ENCODE measurements at regions of chr14 and their contacts with region 1.

Region 1: DNA sequence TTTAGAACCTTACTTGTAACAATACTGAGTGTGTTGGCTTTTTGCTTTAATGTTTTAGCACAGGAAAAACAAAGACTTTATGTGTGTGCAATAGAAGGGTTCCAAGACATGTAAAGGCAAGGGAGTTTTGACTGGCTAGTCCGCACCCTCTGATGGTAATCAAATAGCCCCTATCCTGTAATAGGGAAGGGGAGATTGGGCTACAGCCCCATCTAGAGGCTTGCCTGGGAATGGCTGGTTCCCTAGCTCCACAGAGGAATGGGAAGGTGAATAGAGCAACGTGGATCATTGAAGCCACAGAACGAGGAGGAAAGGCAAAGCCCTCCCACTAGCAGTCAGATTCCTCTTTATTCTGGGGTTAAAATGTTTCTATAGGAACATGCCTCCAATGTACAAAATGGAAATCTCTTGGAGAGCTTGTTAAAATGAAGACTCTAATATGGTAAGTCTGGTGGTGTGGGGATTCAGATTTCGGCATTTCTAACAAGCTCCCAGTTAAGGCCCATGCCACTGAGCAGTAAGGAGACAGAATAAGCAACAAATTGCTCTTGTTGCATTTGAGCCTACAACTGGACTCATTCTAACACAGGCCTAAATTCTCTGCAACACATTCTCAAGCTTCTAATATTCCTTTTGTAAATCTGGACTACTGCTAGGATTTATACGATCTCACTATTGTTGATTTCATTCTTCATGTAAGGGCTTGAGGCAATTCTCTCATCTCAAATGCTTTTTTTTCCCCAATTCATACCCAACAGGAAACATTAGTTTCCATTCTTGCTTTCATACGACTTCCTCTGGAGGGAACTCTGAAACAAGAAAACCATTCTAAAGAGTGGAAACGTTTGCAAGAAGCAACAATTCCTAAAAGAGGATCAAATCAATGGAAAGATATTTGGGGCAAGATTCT is 57.1 kb downstream of the NIN start:
- DNase-seq: peak; percentile 24
- H3K4me3 Mint-ChIP-seq: no peak overlapping the region
- H3K27ac Mint-ChIP-seq: peak overlapping the region; percentile 26
- H3K4me1 Mint-ChIP-seq: peaks cover 31% of the 10 kb centered on the region
- H3K27me3 Mint-ChIP-seq: no peaks in the 10 kb centered on the region

Region 2: GRCh38 chr14:50762001-50762930 is 11.6 kb before region 1 on chr14:
- CTCF ChIA-PET with region 1: interaction called, 41 read pairs
- POLR2A ChIA-PET with region 1: no interaction called
- DNase-seq: no peak
- H3K4me3 Mint-ChIP-seq: no peak overlapping the region
- H3K27ac Mint-ChIP-seq: no peak overlapping the region
- H3K4me1 Mint-ChIP-seq: peaks cover 7% of the 10 kb centered on the region
- H3K27me3 Mint-ChIP-seq: no peaks in the 10 kb centered on the region

Region 3: DNA sequence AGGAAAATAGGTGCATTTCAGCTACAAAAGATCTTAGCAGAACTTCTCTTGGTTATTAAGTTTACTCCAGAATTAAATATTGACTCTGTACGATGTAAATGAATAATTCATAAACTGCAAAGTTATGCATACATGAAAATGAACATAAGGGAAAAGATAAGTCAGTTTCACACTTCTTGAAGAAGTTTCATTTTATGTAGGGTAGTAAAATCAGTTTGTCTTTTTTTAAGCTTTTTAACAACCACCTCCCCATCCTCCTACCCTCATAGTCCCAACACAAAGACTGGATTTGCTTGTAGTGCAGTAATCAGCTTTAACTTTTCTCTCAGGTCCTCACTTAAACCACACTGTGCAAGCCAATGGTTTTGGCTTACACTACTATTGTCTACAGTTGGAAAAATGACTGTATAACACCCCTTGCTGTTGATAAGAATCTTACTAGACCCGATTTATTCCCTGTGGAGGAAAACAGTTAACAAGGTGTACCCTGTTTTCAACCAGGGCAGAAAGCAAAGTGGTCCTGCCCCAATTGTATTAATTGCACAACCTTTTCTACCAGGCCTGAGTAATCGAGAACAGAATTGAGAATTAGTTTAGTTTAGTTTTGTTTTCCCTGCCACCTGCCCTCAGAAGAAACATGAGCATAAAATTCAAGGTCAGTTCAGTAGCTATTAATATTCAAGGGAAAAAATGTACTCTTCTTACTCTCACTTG is 13.0 kb after region 1 on chr14:
- CTCF ChIA-PET with region 1: interaction called, 26 read pairs
- POLR2A ChIA-PET with region 1: no interaction called
- DNase-seq: no peak
- H3K4me3 Mint-ChIP-seq: no peak overlapping the region
- H3K27ac Mint-ChIP-seq: peak overlapping the region; percentile 73
- H3K4me1 Mint-ChIP-seq: peaks cover 80% of the 10 kb centered on the region
- H3K27me3 Mint-ChIP-seq: no peaks in the 10 kb centered on the region

Region 4: DNA sequence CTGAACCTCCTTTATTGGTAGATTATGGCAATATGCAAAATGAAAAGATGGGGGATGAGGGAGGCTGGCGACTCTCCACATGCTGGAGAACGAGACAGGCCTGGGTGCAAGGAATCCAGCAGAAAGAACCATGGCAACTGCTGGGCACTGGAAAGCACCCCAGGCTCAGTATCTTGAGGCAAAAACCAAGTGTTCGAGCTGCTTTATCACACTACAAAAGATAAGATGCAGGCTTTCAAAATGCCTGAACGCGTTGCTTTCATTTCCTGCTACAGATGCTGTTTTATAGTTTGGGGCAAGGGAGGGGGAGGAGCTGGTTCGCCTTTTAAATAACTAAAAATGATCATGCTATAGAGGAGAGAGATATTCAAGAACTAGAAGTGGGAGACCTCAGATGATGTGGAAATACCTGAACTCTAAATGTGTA is 18.2 kb after region 1 on chr14:
- CTCF ChIA-PET with region 1: interaction called, 26 read pairs
- POLR2A ChIA-PET with region 1: no interaction called
- DNase-seq: peak; percentile 46
- H3K4me3 Mint-ChIP-seq: peak overlapping the region; percentile 51
- H3K27ac Mint-ChIP-seq: peak overlapping the region; percentile 95
- H3K4me1 Mint-ChIP-seq: peaks cover 65% of the 10 kb centered on the region
- H3K27me3 Mint-ChIP-seq: no peaks in the 10 kb centered on the region